Activated T-helper 1 cell treated with anti-CD3 and anti-CD28 coated beads, Interleukin-12 subunit alpha, Interleukin-12 subunit beta, Interleukin-2, Interleukin-4 antibody, amounts not matched to agents 30 ng/mL and 10 ng/mL and 1 ng/mL, durations not matched to agents 14 hours and 24 hours and 36 hours (primary cell): ENCODE measurements at regions of chr12 and their contacts with region 1.

Region 1: DNA sequence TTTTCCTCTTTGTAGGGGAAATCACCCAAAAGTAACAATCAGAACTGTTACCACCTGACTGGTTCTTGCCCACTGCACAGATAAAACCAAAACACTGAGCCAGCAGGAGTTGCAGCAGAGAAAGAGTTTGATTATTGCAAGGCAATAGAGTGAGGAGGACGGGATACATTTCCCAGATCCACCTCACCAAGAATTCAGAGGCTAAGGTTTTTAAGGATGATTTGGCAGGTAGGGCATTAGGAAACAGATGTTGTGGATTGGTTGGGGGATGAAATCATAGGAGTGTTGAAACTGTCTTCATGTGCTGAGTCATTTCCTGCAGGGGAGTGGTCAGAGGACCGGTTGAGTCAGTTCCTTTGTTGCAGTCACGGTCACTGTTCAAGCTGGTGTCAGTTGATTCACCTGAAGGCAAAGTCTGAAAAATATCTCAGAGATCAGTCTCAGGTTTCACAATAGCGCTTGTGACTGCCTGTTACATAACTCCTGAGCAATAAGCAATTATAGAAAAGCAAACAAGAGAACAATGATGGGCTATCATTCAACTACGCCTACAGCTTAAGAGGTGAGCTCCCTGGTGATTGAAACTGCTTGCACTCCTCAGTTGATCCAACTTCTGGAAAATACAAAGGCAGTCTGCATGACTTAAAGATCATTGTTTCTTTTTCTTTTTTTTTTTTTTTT is 20.3 kb upstream of the AMN1 start:
- DNase-seq: peak; percentile 71
- H3K4me3 Mint-ChIP-seq: no peak overlapping the region
- H3K27ac Mint-ChIP-seq: peak overlapping the region; percentile 27
- H3K4me1 Mint-ChIP-seq: peaks cover 53% of the 10 kb centered on the region
- H3K27me3 Mint-ChIP-seq: no peaks in the 10 kb centered on the region

Region 2: DNA sequence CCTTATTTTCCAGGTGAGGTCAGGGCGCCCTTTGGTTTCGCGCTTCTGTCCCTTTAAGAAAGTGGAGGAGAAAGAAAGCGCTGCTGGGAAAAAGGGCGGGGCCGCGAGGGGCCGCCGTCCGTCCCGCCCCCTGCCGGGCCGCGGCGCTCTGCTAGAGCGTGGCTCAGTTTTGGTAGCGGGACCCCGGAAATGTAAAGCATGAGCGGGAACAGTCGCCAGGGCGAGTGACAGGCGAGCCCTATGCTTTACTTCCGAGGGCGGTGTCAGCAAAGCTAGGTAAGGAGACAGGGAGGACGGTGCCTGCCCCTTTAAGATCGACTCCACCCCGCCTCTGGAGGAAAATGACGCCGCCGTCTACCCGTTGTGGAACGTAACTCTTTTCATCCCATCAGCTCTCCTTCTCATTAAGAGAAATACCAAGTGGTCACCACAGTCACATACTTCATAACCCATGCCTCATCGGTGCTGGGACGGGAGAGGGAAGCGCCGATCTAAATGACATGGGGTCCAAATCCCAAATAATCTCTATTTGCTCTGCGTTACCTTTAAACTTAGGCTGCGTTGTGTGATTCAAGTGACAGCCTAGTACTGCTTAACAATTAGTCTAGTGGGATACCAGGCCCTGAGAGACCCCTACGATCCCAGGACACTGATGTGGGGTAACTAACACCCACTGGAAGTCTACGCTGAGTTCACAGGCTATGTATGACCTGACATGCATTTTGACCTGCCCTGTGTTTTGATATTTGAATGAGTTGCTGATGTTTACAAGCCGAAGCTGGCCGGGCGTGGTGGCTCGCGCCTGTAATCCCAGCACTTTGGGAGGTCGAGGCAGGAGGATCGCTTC is 89.9 kb before region 1 on chr12 and contains the start of gene ETFBKMT:
- intact Hi-C with region 1: loop called (anchors 1 kb)
- DNase-seq: peak; percentile 95
- H3K4me3 Mint-ChIP-seq: peak within 1 kb of the TSS; percentile 94
- H3K27ac Mint-ChIP-seq: peak within 1 kb of the TSS; percentile 97
- H3K4me1 Mint-ChIP-seq: peaks cover 11% of the 10 kb centered on the region
- H3K27me3 Mint-ChIP-seq: no peaks in the 10 kb centered on the region
- total RNA-seq, gene ETFBKMT: 0.62 and 0.69 TPM in 2 replicates

Region 3: DNA sequence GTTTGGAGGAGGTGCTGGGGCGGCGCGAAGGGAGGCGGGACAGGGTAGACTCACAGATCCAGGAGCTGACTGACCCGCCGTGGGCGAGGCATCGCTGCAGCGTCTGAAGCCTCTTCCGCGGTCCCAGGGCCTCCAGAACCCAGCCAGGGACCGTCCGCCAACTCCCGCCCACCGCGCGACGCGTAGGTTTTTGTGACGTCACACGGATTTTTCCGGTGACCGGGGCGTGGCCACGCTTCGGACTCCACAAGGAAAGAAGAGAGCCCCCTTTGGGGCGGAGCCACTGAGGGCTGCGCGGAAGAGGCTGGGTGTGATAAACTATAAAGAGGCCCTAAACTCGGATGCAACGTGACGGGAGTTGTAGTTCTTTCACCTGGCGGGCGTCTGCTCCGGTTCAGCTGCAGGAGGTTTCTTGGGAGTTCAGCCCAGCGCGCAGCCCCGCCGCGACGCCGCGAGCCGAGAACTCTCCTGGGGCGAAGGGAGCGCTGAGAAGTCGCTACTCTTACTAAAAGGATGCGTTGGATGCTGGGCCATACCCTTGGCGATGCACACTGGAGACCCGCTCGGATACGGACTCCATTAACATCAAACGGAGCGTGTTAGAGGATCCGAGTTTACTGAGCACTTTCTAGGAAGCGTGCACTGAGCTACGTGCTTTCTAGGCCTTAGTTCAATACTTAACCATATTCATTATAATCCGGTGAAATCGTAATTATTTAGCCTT is 20.1 kb before region 1 on chr12 and contains the start of gene AMN1:
- intact Hi-C with region 1: loop called (anchors 1 kb)
- DNase-seq: peak; percentile 100
- H3K4me3 Mint-ChIP-seq: peak within 1 kb of the TSS; percentile 98
- H3K27ac Mint-ChIP-seq: peak within 1 kb of the TSS; percentile 99
- H3K4me1 Mint-ChIP-seq: peaks cover 53% of the 10 kb centered on the region
- H3K27me3 Mint-ChIP-seq: no peaks in the 10 kb centered on the region
- total RNA-seq, gene AMN1: 3.1 and 3.4 TPM in 2 replicates

Region 4: DNA sequence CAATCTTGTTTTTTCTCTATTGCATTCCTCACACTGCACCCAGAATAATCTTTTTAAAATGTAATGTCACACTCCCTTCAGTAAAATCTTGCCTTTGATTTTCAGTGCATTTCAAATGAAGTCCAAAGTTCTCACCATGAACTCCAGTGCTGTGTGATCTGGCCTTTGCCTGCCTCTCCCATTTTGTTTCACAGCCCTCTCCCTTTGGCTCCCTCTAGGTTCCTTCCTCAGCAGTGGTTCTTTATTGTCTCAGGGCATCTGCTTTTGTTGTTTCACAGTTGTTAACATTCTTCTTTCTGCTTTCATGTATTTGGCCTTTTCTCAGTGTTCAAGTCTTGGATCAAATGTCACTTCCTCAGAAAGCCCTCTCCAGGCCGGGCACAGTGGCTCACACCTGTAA is 64.1 kb after region 1 on chr12:
- intact Hi-C with region 1: loop called (anchors 1 kb)
- DNase-seq: no peak
- H3K4me3 Mint-ChIP-seq: no peak overlapping the region
- H3K27ac Mint-ChIP-seq: no peak overlapping the region
- H3K4me1 Mint-ChIP-seq: peaks cover 14% of the 10 kb centered on the region
- H3K27me3 Mint-ChIP-seq: no peaks in the 10 kb centered on the region

Region 5: GRCh38 chr12:32106517-32107358 is 357.6 kb after region 1 on chr12 and contains the start of gene BICD1:
- intact Hi-C with region 1: loop called (anchors 5 kb)
- DNase-seq: peak; percentile 76
- H3K4me3 Mint-ChIP-seq: peak within 1 kb of the TSS; percentile 98
- H3K27ac Mint-ChIP-seq: peak within 1 kb of the TSS; percentile 87
- H3K4me1 Mint-ChIP-seq: peaks cover 36% of the 10 kb centered on the region
- H3K27me3 Mint-ChIP-seq: peaks cover 19% of the 10 kb centered on the region
- total RNA-seq, gene BICD1: 20.9 and 22.2 TPM in 2 replicates

Region 6: GRCh38 chr12:32586390-32586789 is 837.2 kb after region 1 on chr12:
- intact Hi-C with region 1: loop called (anchors 10 kb)
- DNase-seq: no peak
- H3K4me3 Mint-ChIP-seq: peak overlapping the region; percentile 15
- H3K27ac Mint-ChIP-seq: peak overlapping the region; percentile 82
- H3K4me1 Mint-ChIP-seq: peaks cover 65% of the 10 kb centered on the region
- H3K27me3 Mint-ChIP-seq: no peaks in the 10 kb centered on the region